ENCODE measurements at regions of chr12 and their contacts with region 1.

Region 1: GRCh38 chr12:12032851-12033588 is 37.7 kb upstream of the BCL2L14 start:
- DNase-seq: peak; percentile 78
- ATAC-seq: peak; percentile 87
- H3K4me3 Mint-ChIP-seq: peak overlapping the region; percentile 59
- H3K27ac Mint-ChIP-seq: peak overlapping the region; percentile 50
- H3K4me1 Mint-ChIP-seq: peaks cover 21% of the 10 kb centered on the region
- H3K27me3 Mint-ChIP-seq: no peaks in the 10 kb centered on the region

Region 2: DNA sequence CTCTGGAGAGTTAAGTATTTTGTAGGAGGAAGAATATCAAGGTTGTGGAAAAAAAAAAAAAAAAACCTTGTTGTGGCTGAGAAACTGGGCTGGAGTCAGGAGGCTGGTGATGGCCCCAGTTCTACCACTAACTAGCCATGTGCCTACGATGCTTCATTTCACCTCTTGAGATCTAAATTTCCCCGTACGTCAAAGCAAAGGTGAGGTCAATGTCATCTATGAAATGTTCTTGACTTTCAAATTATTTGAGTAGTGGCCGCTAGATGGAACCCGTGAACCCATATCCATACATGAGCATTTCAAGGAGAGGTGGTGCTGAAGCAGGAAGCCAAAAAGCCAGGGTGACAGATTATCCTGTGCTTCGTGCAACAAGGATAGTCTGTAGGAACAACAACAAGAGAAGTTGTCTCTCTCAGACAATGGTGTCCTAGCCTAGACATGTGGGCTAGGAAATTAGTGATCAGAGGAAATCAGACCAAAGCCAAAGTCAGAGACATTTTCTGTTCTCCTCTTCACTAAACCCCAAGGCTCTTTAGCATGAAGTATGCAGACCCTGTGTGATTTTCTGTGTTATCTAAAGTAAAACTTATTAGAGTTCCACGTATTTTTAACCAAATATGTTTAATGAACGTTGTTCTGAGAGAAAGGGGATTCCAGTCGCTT is 479.0 kb before region 1 on chr12:
- CTCF ChIA-PET with region 1: interaction called, 12 read pairs
- DNase-seq: peak; percentile 75
- ATAC-seq: peak; percentile 85
- H3K4me3 Mint-ChIP-seq: no peak overlapping the region
- H3K27ac Mint-ChIP-seq: no peak overlapping the region
- H3K4me1 Mint-ChIP-seq: peaks cover 17% of the 10 kb centered on the region
- H3K27me3 Mint-ChIP-seq: peaks cover 24% of the 10 kb centered on the region

Region 3: DNA sequence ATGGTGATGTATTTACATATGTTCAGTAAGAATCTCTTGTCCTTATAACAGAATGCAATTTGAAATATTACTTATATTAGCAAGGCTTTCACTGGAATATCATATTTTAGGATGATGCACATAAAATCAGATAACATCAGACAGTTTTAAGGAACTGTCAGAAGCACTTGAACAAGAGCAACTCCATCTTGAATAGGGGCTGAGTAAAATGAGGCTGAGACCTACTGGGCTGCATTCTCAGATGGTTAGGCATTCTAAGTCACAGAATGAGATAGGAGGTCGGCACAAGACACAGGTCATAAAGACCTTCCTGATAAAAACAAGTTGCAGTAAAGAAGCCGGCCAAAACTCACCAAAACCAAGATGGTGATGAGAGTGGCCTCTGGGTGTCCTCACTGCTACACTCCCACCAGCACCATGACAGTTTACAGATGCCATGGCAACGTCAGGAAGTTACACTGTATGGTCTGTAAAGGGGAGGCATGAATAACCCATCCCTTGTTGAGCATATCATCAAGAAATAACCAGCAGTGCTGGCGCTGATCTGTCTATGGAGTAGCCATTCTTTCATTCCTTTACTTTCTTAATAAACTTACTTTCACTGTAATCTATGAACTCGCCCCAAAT is 411.1 kb before region 1 on chr12:
- CTCF ChIA-PET with region 1: interaction called, 13 read pairs
- DNase-seq: peak; percentile 48
- ATAC-seq: no peak
- H3K4me3 Mint-ChIP-seq: no peak overlapping the region
- H3K27ac Mint-ChIP-seq: no peak overlapping the region
- H3K4me1 Mint-ChIP-seq: no peaks in the 10 kb centered on the region
- H3K27me3 Mint-ChIP-seq: peaks cover 3% of the 10 kb centered on the region

Region 4: DNA sequence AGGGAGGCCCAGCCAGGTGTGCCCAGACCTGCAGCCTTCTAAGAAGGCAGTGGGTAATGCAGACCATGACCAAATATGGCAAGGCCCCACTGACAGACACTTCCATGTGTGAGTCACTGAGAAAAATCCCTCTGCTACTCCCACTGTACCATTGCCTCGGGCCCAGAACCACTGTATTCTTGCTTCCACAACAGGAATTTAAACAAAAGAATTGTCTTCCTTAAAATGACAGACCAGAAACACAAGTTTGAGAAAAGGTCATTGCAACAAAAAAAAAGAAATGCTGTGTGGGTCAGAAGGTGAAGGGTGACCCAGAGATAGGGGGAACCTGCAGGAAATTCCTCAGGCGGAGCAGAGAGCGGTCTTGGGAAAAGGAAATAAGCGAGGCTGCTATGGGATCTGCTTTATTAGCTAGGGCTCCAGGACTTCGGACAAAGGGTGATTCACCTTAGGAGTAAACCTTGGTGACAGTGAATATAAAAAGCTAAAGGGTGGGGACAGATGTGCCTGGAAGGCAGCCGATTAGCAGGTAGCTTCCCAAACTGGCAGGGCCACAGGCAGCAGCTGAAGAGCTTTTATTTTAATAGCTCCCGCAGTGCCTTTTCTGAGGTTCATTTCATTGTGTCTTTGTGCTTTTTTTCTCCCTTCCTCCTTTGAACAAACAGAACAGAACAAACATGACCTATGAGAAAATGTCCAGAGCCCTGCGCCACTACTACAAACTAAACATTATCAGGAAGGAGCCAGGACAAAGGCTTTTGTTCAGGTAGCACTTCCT is 147.6 kb before region 1 on chr12:
- CTCF ChIA-PET with region 1: interaction called, 10 read pairs
- DNase-seq: no peak
- ATAC-seq: no peak
- H3K4me3 Mint-ChIP-seq: no peak overlapping the region
- H3K27ac Mint-ChIP-seq: no peak overlapping the region
- H3K4me1 Mint-ChIP-seq: peaks cover 17% of the 10 kb centered on the region
- H3K27me3 Mint-ChIP-seq: no peaks in the 10 kb centered on the region

Region 5: DNA sequence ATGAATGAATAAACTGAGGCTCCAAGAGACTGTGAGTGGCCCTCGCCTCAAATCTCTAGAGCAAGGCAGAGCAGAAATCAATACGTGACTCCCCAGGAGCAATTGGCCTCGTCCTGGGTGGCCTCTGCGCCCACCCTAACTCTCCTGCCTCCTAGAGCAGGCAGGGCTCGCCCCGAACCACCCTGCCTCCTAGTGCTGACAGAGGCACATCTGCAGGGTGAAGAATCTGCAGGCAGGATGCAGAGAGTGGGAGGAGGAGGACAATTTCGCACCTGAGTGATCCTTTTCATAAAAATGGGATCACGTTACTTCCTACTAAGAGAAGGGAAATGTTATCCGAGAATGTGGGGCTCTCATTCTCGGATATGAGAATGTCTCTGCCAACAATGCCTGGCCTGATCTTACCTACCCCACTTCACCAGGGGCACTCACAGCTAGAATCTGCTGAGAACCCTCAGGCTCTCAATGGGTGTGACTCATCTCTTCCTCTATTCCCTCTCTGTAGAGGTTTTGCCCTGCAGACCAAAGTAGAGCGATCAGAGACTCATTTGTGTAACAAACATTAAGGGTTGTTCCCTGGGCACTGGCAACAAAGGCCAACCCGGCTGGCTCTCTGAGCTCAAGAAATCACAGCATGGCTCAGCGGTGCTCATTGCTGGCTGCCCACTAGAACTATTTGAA is 23.9 kb before region 1 on chr12:
- CTCF ChIA-PET with region 1: interaction called, 24 read pairs
- DNase-seq: peak; percentile 75
- ATAC-seq: peak; percentile 76
- H3K4me3 Mint-ChIP-seq: peak overlapping the region; percentile 28
- H3K27ac Mint-ChIP-seq: peak overlapping the region; percentile 84
- H3K4me1 Mint-ChIP-seq: peaks cover 69% of the 10 kb centered on the region
- H3K27me3 Mint-ChIP-seq: peaks cover 14% of the 10 kb centered on the region